PC-9 (cell line): ENCODE measurements at regions of chr10 and their contacts with region 1.

Region 1: DNA sequence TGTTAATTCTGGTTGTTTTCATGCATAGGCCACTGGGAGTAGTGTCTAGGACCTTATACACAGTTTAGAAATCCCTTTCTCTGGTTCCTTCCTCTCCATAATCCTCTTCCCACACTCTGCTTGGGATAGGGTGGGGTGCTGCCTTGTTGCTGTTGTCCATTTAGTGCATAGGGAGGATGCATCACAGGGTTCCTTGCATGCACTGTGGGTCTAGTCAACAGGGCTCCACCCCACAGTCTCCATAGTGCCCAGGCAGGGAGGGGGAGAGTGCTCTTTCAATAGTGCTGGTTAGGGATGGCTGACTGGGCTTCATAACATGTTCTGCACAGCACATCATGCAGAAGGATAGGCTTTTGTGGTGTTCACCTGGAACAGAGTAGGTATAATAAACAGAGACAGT is 81.1 kb downstream of the ARHGAP12 start:
- DNase-seq: no peak
- H3K4me3 ChIP-seq: no peak overlapping the region
- H3K27ac ChIP-seq: no peak overlapping the region
- H3K4me1 ChIP-seq: no peaks in the 10 kb centered on the region
- H3K27me3 ChIP-seq: no peaks in the 10 kb centered on the region
- CTCF ChIP-seq: no peak

Region 2: DNA sequence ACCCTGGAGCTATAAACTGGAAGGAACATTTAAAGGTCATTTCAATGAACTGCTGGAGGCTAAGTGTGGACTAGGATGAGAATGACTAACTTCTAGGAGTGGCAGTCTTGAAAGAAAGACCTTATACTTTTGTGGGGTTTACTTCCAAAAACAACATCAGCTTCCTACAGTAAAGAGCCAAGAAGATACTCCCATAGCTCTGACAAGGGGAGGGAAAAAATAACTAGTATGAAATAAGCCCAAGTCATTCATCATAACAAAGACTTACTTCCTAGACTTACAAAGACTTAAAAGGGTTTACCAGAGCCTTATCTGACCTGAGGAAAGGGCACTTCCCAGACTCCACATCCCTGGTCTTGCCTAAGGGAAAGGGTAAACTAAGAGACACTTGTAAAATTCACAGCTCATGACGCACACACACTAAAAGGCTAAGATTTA is 49.5 kb after region 1 on chr10:
- CTCF ChIA-PET with region 1: interaction called, 22 read pairs
- POLR2A ChIA-PET with region 1: interaction called, 5 read pairs
- intact Hi-C with region 1: no loop called
- DNase-seq: no peak
- H3K4me3 ChIP-seq: no peak overlapping the region
- H3K27ac ChIP-seq: peak overlapping the region; percentile 11; the same call in 1 of the 2 replicates
- H3K4me1 ChIP-seq: 0 out of 2 replicates have a peak, but pooled peaks cover 4% of the 10 kb centered on the region
- H3K27me3 ChIP-seq: no peaks in the 10 kb centered on the region
- CTCF ChIP-seq: no peak

Region 3: DNA sequence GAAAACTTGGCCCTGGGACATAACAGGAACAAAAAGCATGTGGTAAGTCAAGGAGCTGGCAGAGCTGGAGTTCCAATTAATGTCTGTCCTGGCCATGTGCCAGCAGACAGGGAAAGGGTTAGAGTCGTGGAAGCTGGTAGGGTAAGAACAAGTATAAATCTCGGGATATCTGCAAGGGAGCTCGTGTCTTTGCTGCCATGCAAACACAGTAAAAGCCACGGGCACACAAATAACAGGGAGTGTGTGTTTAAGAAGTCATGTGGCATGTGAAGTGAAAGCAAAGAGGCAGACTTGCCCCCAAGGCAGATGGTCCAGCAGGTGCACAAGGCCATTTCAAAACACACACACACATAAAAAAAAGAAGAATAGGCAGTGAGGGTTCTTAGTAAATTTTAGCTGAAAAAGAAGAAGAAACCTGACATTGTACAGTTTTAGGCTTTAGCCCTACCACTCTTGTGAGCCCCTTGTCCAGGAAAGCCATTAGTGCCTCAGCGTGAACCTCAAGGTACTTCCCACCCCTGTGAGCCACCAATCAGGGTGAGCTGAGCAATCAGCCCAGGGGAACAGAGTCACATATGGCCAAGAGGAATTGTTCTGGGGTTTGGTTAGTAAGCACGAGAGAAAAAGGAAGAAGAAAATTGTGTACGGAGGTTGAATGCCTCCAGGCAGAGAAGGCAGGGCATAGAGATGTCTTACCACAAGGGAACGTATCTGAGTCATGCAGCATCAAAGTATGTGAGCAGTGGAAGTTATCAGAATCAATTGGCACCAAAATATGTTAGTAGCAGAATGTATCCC is 114.0 kb after region 1 on chr10:
- CTCF ChIA-PET with region 1: no interaction called
- POLR2A ChIA-PET with region 1: no interaction called
- intact Hi-C with region 1: no loop called
- DNase-seq: peak; percentile 74 to 95
- H3K4me3 ChIP-seq: peak overlapping the region; percentile 19; the same call in 1 of the 2 replicates
- H3K27ac ChIP-seq: peak overlapping the region; percentile 88
- H3K4me1 ChIP-seq: peaks cover 67% of the 10 kb centered on the region
- H3K27me3 ChIP-seq: no peaks in the 10 kb centered on the region
- CTCF ChIP-seq: no peak

Region 4: GRCh38 chr10:32271617-32272016 is 424.1 kb after region 1 on chr10:
- CTCF ChIA-PET with region 1: no interaction called
- POLR2A ChIA-PET with region 1: no interaction called
- intact Hi-C with region 1: no loop called
- DNase-seq: no peak
- H3K4me3 ChIP-seq: no peak overlapping the region
- H3K27ac ChIP-seq: no peak overlapping the region
- H3K4me1 ChIP-seq: no peaks in the 10 kb centered on the region
- H3K27me3 ChIP-seq: no peaks in the 10 kb centered on the region
- CTCF ChIP-seq: no peak